ENCODE measurements at regions of chr13 and their contacts with region 1.

Region 1: GRCh38 chr13:46288570-46289259 is 77.0 kb downstream of the LRRC63 start:
- DNase-seq: peak; percentile 58 to 82 (median 75)
- H3K4me3 ChIP-seq: no peak overlapping the region
- H3K27ac ChIP-seq: no peak overlapping the region
- H3K4me1 ChIP-seq: peaks cover 0 to 5% (median 0%) of the 10 kb centered on the region in 4 experiments
- H3K27me3 ChIP-seq: no peaks in the 10 kb centered on the region

Region 2: DNA sequence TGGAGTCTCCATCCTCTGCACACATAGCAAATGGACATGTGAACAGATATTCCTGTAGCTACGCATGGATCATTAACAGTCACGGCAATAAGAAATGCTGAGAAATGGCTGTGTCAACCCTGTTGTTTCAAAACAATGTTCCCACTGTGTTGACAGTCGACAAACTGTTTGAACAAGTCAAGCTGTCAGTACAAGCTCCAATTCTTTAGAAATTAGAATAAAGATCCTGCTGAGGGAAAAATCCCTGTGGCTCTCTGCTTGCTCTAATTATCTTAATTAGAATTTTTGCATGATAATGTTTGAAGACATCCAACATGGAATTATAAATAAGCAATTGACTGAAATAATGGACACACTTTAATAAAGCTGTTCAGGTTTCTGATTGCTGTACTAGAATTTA is 145.9 kb before region 1 on chr13:
- CTCF ChIA-PET with region 1: interaction called, 11 read pairs
- POLR2A ChIA-PET with region 1: no interaction called
- DNase-seq: no peak
- H3K4me3 ChIP-seq: no peak overlapping the region
- H3K27ac ChIP-seq: no peak overlapping the region
- H3K4me1 ChIP-seq: no peaks in the 10 kb centered on the region
- H3K27me3 ChIP-seq: no peaks in the 10 kb centered on the region

Region 3: GRCh38 chr13:46267166-46267565 is 21.5 kb before region 1 on chr13:
- CTCF ChIA-PET with region 1: no interaction called
- POLR2A ChIA-PET with region 1: no interaction called
- DNase-seq: no peak
- H3K4me3 ChIP-seq: no peak overlapping the region
- H3K27ac ChIP-seq: no peak overlapping the region
- H3K4me1 ChIP-seq: no peaks in the 10 kb centered on the region
- H3K27me3 ChIP-seq: no peaks in the 10 kb centered on the region

Measured in common myeloid progenitor, CD34-positive (primary cell).